ENCODE measurements at regions of chr7 and their contacts with region 1.

Region 1: GRCh38 chr7:32957326-32958045 is at the start of gene FKBP9:
- DNase-seq: peak; percentile 91 to 95
- ATAC-seq: peak; percentile 92 to 95 (median 94)
- H3K4me3 ChIP-seq: peak within 1 kb of the TSS; percentile 94
- H3K27ac ChIP-seq: peak within 1 kb of the TSS; percentile 89
- H3K4me1 ChIP-seq: peaks cover 15% of the 10 kb centered on the region
- H3K27me3 ChIP-seq: no peaks in the 10 kb centered on the region
- CTCF ChIP-seq: no peak
- total RNA-seq, gene FKBP9: 23.2 to 42.6 (median 33.8) TPM

Region 2: GRCh38 chr7:33040803-33041516 is 83.5 kb after region 1 on chr7:
- intact Hi-C with region 1: loop called in 1 of 2 experiments (anchors 5 kb)
- DNase-seq: no peak
- ATAC-seq: peak; percentile 89 to 92 (median 91)
- H3K4me3 ChIP-seq: peak overlapping the region; percentile 76
- H3K27ac ChIP-seq: peak overlapping the region; percentile 83
- H3K4me1 ChIP-seq: peaks cover 34% of the 10 kb centered on the region
- H3K27me3 ChIP-seq: no peaks in the 10 kb centered on the region
- CTCF ChIP-seq: no peak

Measured in psoas muscle (tissue), 8 donors.